ENCODE measurements at regions of chr17 and their contacts with region 1.

Region 1: GRCh38 chr17:10631048-10631700 is 25.9 kb downstream of the MYH3 start:
- DNase-seq: peak; percentile 26
- H3K4me3 ChIP-seq: no peak overlapping the region
- H3K27ac ChIP-seq: no peak overlapping the region
- H3K4me1 ChIP-seq: no peaks in the 10 kb centered on the region
- H3K27me3 ChIP-seq: no peaks in the 10 kb centered on the region
- CTCF ChIP-seq: peak; percentile 85 to 87
- POLR2A ChIP-seq: no peak

Region 2: DNA sequence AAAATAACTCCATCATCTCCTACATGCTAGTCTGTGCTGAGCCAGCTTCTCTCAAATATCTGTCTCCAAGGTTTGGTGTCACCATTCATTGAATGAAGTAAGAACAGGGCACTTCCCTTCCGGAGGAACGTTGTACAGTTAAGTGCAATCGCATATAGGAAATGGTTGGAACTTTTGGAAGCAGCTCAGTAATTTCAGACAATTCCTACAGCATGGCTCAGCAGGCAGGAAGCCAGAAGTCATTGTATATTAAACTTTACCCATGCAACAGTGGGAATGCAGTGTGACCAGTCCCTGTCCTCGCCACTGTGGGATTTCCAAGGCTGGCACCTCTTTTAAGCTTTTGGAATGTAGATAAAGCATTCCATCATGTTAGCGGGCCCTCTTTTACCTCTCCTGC is 30.6 kb before region 1 on chr17:
- CTCF ChIA-PET with region 1: no interaction called
- POLR2A ChIA-PET with region 1: no interaction called
- dilution Hi-C with region 1: no loop called
- intact Hi-C with region 1: no loop called
- DNase-seq: peak; percentile 16
- H3K4me3 ChIP-seq: no peak overlapping the region
- H3K27ac ChIP-seq: no peak overlapping the region
- H3K4me1 ChIP-seq: no peaks in the 10 kb centered on the region
- H3K27me3 ChIP-seq: no peaks in the 10 kb centered on the region
- CTCF ChIP-seq: no peak
- POLR2A ChIP-seq: no peak

Region 3: DNA sequence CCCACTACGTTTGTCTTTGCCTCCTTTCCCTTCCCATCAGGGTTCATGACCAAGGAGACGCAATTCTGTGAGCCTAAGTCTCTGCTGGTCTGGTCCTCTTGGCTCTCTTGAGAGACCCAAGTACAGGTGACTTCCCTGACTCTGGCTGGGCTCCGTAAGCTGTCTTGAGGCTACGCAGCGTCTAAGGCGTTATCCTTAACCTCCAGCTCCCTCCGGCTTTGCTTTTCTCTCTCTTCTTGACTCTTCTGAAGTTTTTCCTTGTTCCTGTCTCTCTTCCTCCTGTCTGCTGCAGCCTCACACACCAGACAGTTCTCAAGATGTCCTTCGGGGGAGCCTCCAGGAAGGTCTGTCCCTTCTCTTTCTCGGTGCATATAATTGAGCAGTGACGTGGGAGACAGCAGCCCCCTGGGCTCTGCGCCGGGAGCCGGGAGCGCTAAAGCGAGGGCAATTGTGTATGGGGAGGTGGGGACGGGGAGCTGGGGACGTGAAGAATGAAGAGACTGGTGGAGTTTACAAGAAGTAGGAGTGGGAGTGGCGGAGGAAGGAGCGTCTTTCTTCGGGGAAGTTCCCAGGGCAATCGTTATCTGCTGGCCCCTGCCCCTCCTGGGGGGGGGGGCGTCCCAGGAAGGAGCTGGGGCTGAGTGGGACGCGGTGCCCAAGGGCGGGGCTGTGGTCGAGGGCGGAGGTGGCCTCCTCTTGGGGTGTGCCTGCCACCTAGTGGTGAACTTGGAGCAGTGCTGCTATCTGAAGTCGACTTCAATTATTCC is 213.6 kb after region 1 on chr17:
- CTCF ChIA-PET with region 1: interaction called, 5 read pairs
- POLR2A ChIA-PET with region 1: no interaction called
- dilution Hi-C with region 1: no loop called
- intact Hi-C with region 1: loop called (anchors 1 kb)
- DNase-seq: peak; percentile 56
- H3K4me3 ChIP-seq: peak overlapping the region in 1 of 3 experiments; percentile 33
- H3K27ac ChIP-seq: no peak overlapping the region
- H3K4me1 ChIP-seq: no peaks in the 10 kb centered on the region
- H3K27me3 ChIP-seq: peaks cover 0 to 4% of the 10 kb centered on the region in 2 experiments
- CTCF ChIP-seq: peak; percentile 73 to 88
- POLR2A ChIP-seq: no peak

Region 4: GRCh38 chr17:10992106-10992880 is 361.1 kb after region 1 on chr17:
- CTCF ChIA-PET with region 1: no interaction called
- POLR2A ChIA-PET with region 1: no interaction called
- dilution Hi-C with region 1: no loop called
- intact Hi-C with region 1: no loop called
- DNase-seq: no peak
- H3K4me3 ChIP-seq: no peak overlapping the region
- H3K27ac ChIP-seq: no peak overlapping the region
- H3K4me1 ChIP-seq: no peaks in the 10 kb centered on the region
- H3K27me3 ChIP-seq: no peaks in the 10 kb centered on the region
- CTCF ChIP-seq: no peak
- POLR2A ChIP-seq: no peak